ENCODE measurements at regions of chr10 and their contacts with region 1.

Region 1: GRCh38 chr10:35126530-35127296 is at the start of gene CREM:
- DNase-seq: peak; percentile 97 to 99 (median 97)
- H3K4me3 ChIP-seq: peak within 1 kb of the TSS; percentile 75 to 81 (median 80)
- H3K4me3 Mint-ChIP-seq: peak within 1 kb of the TSS; percentile 86 to 90
- H3K27ac ChIP-seq: peak within 1 kb of the TSS; percentile 99
- H3K27ac Mint-ChIP-seq: peak within 1 kb of the TSS; percentile 98 to 100 (median 99)
- H3K4me1 ChIP-seq: peaks cover 13 to 19% of the 10 kb centered on the region in 2 donors
- H3K4me1 Mint-ChIP-seq: peaks cover 14% of the 10 kb centered on the region
- H3K27me3 ChIP-seq: no peaks in the 10 kb centered on the region
- H3K27me3 Mint-ChIP-seq: no peaks in the 10 kb centered on the region
- CTCF ChIP-seq: peak; percentile 82
- polyA plus RNA-seq, gene CREM: 11.4 to 12.4 (median 12.1) TPM

Region 2: DNA sequence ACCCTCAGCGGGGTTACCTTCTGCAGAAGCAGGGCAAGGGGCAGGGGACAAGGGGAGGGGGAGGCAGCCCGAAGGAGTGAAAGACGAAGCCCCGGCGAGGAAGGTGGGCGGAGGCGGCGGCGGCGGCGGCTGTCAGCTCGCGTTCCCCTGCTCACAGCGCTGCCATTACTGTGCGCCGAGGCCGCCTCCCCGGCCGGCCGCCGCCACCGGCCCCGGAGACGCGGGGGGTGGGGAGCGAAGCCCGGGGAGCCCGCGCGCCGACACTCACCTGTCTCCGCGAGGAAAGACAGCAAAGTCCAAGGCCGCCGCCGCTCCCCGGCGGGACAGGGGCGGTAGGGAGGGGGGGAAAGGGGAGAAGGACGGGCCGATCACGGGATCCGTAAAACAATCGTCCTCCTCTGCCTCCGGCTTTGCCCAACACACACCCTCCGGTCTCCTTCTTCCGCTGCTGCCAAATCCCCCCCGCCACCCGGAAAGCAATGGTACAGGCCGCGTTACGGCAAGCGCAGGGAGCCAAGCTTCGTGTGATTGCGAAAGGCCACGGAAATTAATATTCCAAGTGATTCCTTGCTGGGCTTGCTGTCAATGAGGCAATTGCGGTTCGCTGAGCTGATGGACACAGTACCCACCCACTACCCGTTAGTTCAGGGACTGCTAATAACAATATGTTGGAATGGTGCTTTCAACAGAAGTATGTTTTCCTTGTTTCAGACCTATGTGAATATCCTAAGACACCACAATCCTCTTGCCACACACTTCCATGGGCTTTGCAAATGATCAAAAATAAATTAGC is 36.4 kb before region 1 on chr10 and contains the start of gene CUL2:
- intact Hi-C with region 1: loop called (anchors 2 to 5 kb)
- DNase-seq: peak; percentile 89 to 95 (median 92)
- H3K4me3 ChIP-seq: peak within 1 kb of the TSS; percentile 79 to 95 (median 92)
- H3K4me3 Mint-ChIP-seq: peak within 1 kb of the TSS; percentile 89 to 94
- H3K27ac ChIP-seq: peak within 1 kb of the TSS; percentile 78 to 96
- H3K27ac Mint-ChIP-seq: peak within 1 kb of the TSS; percentile 85 to 98 (median 92)
- H3K4me1 ChIP-seq: peaks cover 24 to 32% of the 10 kb centered on the region in 2 donors
- H3K4me1 Mint-ChIP-seq: peaks cover 51% of the 10 kb centered on the region
- H3K27me3 ChIP-seq: no peaks in the 10 kb centered on the region
- H3K27me3 Mint-ChIP-seq: peaks cover 0 to 3% (median 0%) of the 10 kb centered on the region in 3 donors
- CTCF ChIP-seq: no peak
- polyA plus RNA-seq, gene CUL2: 10.2 to 22.8 (median 12.9) TPM

Region 3: GRCh38 chr10:35195361-35196306 is 68.9 kb after region 1 on chr10:
- intact Hi-C with region 1: loop called (anchors 2 kb)
- DNase-seq: peak; percentile 91 to 96 (median 95)
- H3K4me3 ChIP-seq: peak overlapping the region; percentile 44 to 71 (median 65)
- H3K4me3 Mint-ChIP-seq: peak overlapping the region; percentile 81 to 88
- H3K27ac ChIP-seq: peak overlapping the region; percentile 88 to 93
- H3K27ac Mint-ChIP-seq: peak overlapping the region; percentile 98 to 100 (median 99)
- H3K4me1 ChIP-seq: peaks cover 22 to 28% of the 10 kb centered on the region in 2 donors
- H3K4me1 Mint-ChIP-seq: peaks cover 34% of the 10 kb centered on the region
- H3K27me3 ChIP-seq: no peaks in the 10 kb centered on the region
- H3K27me3 Mint-ChIP-seq: peaks cover 0 to 2% (median 0%) of the 10 kb centered on the region in 3 donors
- CTCF ChIP-seq: peak; percentile 98

Region 4: DNA sequence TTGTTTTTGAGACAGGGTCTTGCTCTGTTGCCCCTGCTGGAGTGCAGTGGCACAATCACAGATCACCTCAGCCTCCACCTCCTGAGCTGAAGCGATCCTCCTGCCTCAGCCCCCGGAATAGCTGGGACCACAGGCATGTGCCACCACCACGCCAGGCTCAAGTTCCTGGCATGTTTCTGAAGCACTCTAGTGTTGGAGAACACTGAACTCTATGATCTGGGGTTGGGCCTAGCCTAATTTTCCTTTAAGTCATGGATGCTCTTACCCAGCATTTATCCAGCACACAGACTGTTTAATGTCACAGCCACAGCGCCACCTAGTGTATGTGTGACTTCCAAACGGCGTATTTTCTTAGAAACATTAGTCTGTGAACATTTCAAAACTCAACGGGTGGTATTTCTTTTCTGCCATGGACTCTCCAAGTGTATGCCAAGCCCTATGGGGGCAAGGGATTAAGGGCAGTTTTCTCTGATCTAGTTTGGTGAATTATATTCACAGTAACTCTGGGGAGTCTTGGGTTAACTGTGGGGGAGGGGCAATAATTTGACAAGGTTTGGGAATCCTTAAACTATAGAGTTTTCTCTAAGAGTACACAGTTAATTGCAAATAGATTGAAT is 91.7 kb after region 1 on chr10:
- intact Hi-C with region 1: loop called (anchors 2 kb)
- DNase-seq: peak; percentile 70 to 82 (median 78)
- H3K4me3 ChIP-seq: no peak overlapping the region
- H3K4me3 Mint-ChIP-seq: no peak overlapping the region
- H3K27ac ChIP-seq: no peak overlapping the region
- H3K27ac Mint-ChIP-seq: peak overlapping the region in 4 of 7 donors; percentile 31 to 74 (median 50)
- H3K4me1 ChIP-seq: peaks cover 6 to 11% of the 10 kb centered on the region in 2 donors
- H3K4me1 Mint-ChIP-seq: peaks cover 30% of the 10 kb centered on the region
- H3K27me3 ChIP-seq: no peaks in the 10 kb centered on the region
- H3K27me3 Mint-ChIP-seq: peaks cover 0 to 5% (median 2%) of the 10 kb centered on the region in 3 donors
- CTCF ChIP-seq: peak; percentile 81

Region 5: GRCh38 chr10:35336084-35336831 is 209.5 kb after region 1 on chr10 and contains the start of gene CCNY:
- intact Hi-C with region 1: loop called in 1 of 2 experiments (anchors 5 kb)
- DNase-seq: peak; percentile 38 to 60 (median 46)
- H3K4me3 ChIP-seq: peak within 1 kb of the TSS; percentile 85 to 93 (median 88)
- H3K4me3 Mint-ChIP-seq: peak within 1 kb of the TSS; percentile 89 to 96
- H3K27ac ChIP-seq: peak within 1 kb of the TSS; percentile 19 to 71
- H3K27ac Mint-ChIP-seq: peak within 1 kb of the TSS; percentile 57 to 90 (median 86)
- H3K4me1 ChIP-seq: peaks cover 45 to 68% of the 10 kb centered on the region in 2 donors
- H3K4me1 Mint-ChIP-seq: peaks cover 69% of the 10 kb centered on the region
- H3K27me3 ChIP-seq: no peaks in the 10 kb centered on the region
- H3K27me3 Mint-ChIP-seq: peaks cover 0 to 1% (median 0%) of the 10 kb centered on the region in 3 donors
- CTCF ChIP-seq: no peak
- polyA plus RNA-seq, gene CCNY: 39.9 to 116 (median 64.8) TPM

Region 6: DNA sequence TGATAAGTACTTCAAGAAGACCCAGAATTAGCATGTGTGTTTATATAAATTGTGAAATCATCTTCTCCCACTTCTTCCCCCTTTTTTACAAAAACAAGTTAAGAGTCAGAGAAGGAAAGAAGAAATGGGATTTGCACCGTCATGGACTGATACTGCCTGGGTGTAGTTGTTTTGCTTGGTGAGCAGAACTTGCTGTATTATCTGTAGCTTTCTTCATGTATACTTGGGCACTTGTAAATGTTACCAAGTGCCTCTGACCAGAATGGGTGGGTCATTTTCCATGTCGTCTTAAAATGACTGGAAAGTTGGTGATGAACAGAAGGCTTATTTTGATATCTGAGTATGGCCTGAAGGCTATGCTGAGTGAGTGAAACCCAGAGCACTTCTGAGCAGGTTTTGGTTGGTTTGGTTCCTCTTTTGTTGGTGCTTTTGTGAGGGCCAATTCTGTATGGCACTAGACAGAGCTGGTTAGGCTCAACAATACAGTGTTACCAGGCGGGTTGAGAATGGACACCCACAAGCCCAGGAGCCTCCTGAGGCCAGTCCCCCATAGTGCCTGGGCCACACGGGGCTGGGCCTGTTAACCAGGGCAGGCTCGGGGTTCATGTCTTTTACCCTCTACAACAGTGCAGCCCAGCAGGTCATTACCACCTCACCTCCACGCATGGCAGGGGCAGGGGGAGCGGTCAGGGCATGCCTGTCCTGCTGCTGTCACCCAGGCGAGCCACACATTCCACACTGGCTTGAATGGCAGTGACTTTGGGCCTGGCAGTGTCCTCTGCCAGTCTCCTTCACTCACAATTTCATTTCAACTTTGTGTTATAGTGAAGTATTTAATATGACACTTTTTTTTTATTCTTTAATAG is 324.7 kb after region 1 on chr10:
- intact Hi-C with region 1: loop called in 1 of 2 experiments (anchors 5 kb)
- DNase-seq: peak; percentile 53 to 84 (median 77)
- H3K4me3 ChIP-seq: peak overlapping the region; percentile 7 to 76 (median 43)
- H3K4me3 Mint-ChIP-seq: peak overlapping the region; percentile 80 to 96
- H3K27ac ChIP-seq: peak overlapping the region; percentile 89 to 97
- H3K27ac Mint-ChIP-seq: peak overlapping the region; percentile 92 to 99 (median 95)
- H3K4me1 ChIP-seq: peaks cover 93 to 97% of the 10 kb centered on the region in 2 donors
- H3K4me1 Mint-ChIP-seq: peaks cover 93% of the 10 kb centered on the region
- H3K27me3 ChIP-seq: no peaks in the 10 kb centered on the region
- H3K27me3 Mint-ChIP-seq: peaks cover 0 to 1% (median 0%) of the 10 kb centered on the region in 3 donors
- CTCF ChIP-seq: no peak

Region 7: GRCh38 chr10:35822316-35822715 is 695.6 kb after region 1 on chr10:
- intact Hi-C with region 1: no loop called
- DNase-seq: no peak
- H3K4me3 ChIP-seq: no peak overlapping the region
- H3K4me3 Mint-ChIP-seq: no peak overlapping the region
- H3K27ac ChIP-seq: no peak overlapping the region
- H3K27ac Mint-ChIP-seq: no peak overlapping the region
- H3K4me1 ChIP-seq: no peaks in the 10 kb centered on the region
- H3K4me1 Mint-ChIP-seq: no peaks in the 10 kb centered on the region
- H3K27me3 ChIP-seq: no peaks in the 10 kb centered on the region
- H3K27me3 Mint-ChIP-seq: no peaks in the 10 kb centered on the region
- CTCF ChIP-seq: no peak

Measured in CD14-positive monocyte (primary cell).